Activated CD4-positive, alpha-beta memory T cell treated with anti-CD3 and anti-CD28 coated beads, Interleukin-2, amount 10 ng/mL, durations not matched to agents 7 days and 5 days (primary cell): ENCODE measurements at regions of chr7 and their contacts with region 1.

Region 1: DNA sequence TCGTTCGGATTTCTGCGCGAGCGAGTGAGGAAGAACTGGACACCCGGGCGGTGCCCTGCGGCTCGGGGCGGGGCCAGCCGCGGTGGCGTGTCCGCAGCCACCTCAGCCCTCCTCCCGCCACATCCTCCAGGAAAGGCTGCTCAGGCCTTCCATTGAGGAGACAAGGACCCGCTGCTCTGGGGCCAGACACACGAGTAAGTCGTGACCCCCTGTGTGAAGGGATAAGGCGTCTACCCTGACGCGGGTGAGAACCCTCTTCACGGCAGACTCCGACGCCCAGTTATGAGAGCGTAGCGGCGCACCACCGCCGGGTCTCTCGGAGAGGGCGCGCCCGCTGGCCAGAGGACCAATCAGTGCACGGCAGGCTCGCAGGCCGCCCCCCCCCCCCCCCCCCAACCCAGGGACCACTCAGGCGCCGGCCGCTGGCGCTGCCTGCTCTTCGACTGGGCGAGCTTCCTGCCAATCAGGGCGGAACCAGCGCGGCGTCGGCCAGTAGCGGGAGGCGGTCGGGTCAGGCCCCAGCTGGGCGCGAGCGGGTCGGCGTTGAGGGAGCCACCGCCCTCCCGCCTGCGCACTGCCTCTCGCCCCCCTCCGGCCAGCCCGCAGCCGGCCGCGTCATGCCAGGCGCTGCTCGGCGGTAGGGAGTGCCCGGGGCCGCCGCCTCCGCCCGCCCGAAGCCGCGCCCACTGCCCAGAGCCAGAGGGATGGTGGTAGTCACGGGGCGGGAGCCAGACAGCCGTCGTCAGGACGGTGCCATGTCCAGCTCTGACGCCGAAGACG is at the start of gene KCTD7:
- DNase-seq: peak; percentile 96
- H3K4me3 Mint-ChIP-seq: peak within 1 kb of the TSS; percentile 82
- H3K27ac Mint-ChIP-seq: peak within 1 kb of the TSS; percentile 94
- H3K4me1 Mint-ChIP-seq: peaks cover 51% of the 10 kb centered on the region
- H3K27me3 Mint-ChIP-seq: no peaks in the 10 kb centered on the region
- total RNA-seq, gene KCTD7: 31.9 to 33.8 TPM

Region 2: GRCh38 chr7:66654123-66654732 is 25.7 kb after region 1 on chr7:
- CTCF ChIA-PET with region 1: interaction called, 3 read pairs
- POLR2A ChIA-PET with region 1: interaction called, 26 read pairs
- DNase-seq: peak; percentile 97
- H3K4me3 Mint-ChIP-seq: peak overlapping the region; percentile 94
- H3K27ac Mint-ChIP-seq: peak overlapping the region; percentile 93
- H3K4me1 Mint-ChIP-seq: peaks cover 37% of the 10 kb centered on the region
- H3K27me3 Mint-ChIP-seq: no peaks in the 10 kb centered on the region

Region 3: DNA sequence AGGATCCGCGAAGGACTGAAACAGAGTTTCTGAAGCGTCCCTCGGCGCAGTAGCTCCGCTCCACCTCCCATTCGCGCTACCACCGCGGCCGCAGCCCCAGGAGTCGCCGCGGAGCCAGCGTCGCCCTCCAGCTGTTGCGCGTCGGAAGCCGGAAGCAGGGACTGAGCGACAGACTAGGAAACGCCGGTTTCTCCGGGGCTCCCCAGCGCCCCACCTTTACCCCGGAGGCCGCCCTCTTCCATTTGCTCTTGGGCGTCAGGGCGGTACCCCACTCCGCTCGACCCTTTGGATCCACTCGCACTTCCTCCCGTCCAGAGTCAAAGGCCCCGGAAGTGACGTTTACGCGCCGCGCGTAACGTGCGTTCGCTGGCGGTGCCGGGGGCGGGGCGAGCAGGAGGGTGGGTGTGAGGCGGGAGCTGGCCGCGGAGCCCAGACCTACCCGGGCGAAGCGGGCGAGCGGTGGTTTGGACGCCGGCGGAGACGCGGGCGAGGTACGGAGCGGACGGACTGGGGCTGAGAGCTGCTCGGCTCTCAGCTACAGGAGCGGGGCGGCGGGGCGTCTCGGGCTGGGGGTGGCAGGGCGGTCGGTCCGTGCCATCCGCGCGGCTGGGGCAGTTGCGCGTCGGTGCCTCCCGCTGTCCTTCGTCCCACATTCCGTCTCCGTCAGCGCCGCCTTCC is 111.9 kb after region 1 on chr7 and contains the start of gene RABGEF1:
- CTCF ChIA-PET with region 1: interaction called, 7 read pairs
- POLR2A ChIA-PET with region 1: interaction called, 14 read pairs
- DNase-seq: peak; percentile 97
- H3K4me3 Mint-ChIP-seq: peak within 1 kb of the TSS; percentile 93
- H3K27ac Mint-ChIP-seq: peak within 1 kb of the TSS; percentile 96
- H3K4me1 Mint-ChIP-seq: peaks cover 38% of the 10 kb centered on the region
- H3K27me3 Mint-ChIP-seq: no peaks in the 10 kb centered on the region
- total RNA-seq, gene RABGEF1: 22.1 to 24.2 TPM